ENCODE measurements at regions of chr17 and their contacts with region 1.

Region 1: GRCh38 chr17:82127704-82128103 is 29.7 kb upstream of the FASN start:
- DNase-seq: no peak
- H3K4me3 ChIP-seq: no peak overlapping the region
- H3K27ac ChIP-seq: no peak overlapping the region
- H3K4me1 ChIP-seq: no peaks in the 10 kb centered on the region
- H3K27me3 ChIP-seq: no peaks in the 10 kb centered on the region
- CTCF ChIP-seq: no peak

Region 2: DNA sequence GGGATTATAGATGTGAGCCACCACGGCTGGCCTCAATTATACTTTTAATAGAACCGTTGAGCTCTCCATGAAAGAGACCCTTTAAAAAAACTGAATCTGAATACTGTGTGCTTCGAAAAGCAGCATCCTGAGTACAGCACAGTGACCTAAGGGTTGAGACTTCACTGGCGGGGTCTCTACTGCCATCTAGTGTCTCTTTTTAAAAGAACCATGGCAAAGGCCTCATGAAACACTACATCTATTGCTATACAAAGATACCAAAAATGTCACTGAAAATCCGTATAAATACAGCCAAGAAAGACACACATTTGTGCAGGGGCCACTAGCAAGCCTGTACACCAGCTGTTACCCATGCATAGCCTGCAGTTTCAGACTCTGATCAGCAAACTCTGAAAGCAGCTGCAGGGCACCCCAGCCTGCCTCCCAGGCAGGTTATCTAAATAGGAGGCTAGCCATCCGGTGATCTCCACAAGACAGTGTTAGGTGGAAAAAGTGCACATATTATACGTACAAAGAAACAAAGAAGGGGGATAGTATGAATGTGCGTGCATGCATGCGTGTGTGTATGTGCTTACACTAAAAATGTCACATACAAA is 526.1 kb before region 1 on chr17:
- CTCF ChIA-PET with region 1: no interaction called
- POLR2A ChIA-PET with region 1: no interaction called
- intact Hi-C with region 1: no loop called
- DNase-seq: peak; percentile 87
- H3K4me3 ChIP-seq: no peak overlapping the region
- H3K27ac ChIP-seq: no peak overlapping the region
- H3K4me1 ChIP-seq: peaks cover 4% of the 10 kb centered on the region
- H3K27me3 ChIP-seq: no peaks in the 10 kb centered on the region
- CTCF ChIP-seq: peak; percentile 84

Region 3: GRCh38 chr17:81973432-81973831 is 154.3 kb before region 1 on chr17:
- CTCF ChIA-PET with region 1: interaction called, 12 read pairs
- POLR2A ChIA-PET with region 1: no interaction called
- intact Hi-C with region 1: no loop called
- DNase-seq: no peak
- H3K4me3 ChIP-seq: no peak overlapping the region
- H3K27ac ChIP-seq: no peak overlapping the region
- H3K4me1 ChIP-seq: no peaks in the 10 kb centered on the region
- H3K27me3 ChIP-seq: no peaks in the 10 kb centered on the region
- CTCF ChIP-seq: no peak

Region 4: DNA sequence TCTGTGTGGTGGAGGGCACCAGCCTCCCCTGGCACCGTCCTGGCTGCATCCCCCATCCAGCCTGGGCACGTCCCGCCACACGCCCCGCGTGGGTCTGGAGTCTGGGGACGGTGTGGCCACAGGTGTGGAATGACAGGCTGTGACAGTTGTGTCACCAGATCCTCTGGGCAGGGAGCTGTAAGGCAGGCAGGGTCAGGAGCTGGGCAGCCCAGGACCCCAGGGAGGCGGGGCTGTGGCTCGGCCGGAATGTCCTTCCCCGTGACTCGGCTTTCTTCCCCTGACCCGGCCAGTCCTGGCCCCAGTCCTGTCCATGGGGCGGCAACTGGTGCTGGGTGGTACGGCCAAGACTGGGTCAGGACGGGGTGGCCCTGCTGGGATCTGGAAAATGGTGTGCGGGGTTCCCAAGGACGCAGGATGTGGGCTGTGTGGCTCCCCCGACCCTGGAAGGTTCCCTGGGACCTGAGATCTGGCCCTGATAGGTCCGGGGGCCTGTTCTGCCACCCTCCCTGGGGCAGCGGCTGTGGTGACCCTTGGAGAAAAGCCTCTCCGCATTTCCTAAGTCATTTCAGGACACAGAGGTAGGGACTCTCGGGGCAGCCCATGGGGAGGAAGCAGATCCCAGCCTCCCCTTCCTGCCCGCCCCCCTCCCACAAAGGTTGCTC is 97.8 kb after region 1 on chr17:
- CTCF ChIA-PET with region 1: no interaction called
- POLR2A ChIA-PET with region 1: no interaction called
- intact Hi-C with region 1: no loop called
- DNase-seq: no peak
- H3K4me3 ChIP-seq: no peak overlapping the region
- H3K27ac ChIP-seq: no peak overlapping the region
- H3K4me1 ChIP-seq: peaks cover 4% of the 10 kb centered on the region
- H3K27me3 ChIP-seq: peaks cover 7% of the 10 kb centered on the region
- CTCF ChIP-seq: no peak

Measured in A673 (cell line).